Cardiac septum (tissue), 1 donor: ENCODE measurements at regions of chr18 and their contacts with region 1.

Region 1: GRCh38 chr18:63161761-63162195 is 157.8 kb downstream of the BCL2 start:
- DNase-seq: peak; percentile 83

Region 2: DNA sequence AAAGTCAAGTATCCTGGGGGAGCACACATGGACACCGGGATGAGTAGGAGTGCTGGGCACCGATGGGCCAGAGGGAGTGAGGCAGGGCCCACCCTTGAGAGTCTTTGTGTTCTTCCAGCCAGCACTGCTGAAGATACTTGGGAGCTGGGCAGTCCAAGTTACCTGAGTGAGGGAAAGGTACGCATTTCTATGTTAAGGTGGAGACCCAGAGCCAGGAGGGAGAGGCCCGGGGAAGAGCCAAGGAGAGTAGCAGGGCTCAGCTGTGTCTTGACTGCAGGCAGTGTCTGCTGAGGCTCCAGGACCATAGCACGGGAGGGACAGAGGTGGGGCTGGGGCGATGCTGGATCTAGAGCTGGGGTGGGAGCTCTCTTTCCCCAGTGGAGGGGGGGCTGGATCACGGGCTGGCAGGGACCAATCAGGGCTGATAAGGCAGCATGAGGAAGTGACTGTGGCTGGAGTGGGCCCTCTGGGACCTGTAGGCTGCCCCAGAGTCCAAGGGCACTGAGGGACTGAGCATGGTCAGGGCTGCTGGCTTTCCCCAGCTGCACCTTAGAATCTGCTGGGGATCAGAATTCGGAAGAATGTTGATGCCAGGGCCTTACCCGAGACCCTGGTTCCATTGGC is 157.2 kb before region 1 on chr18:
- intact Hi-C with region 1: no loop called
- DNase-seq: peak; percentile 65

Region 3: DNA sequence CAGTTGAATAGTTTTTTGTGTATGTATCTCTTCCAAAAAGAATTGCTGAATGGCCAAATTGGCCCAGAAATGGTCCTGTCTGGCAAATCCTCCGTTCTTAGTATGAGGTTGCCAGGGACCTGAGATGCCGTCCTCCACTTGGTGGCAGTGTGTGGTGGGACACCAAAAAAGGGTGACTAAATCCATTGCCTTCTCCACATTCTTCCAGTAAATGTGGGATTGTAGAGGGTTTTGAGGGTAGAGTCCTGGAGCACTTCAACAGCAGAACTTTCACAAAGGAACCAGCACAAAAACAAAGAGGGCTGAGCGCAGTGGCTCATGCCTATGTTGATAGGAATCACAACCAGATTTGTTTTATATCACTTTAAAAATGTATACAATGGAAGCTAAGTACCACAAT is 42.1 kb before region 1 on chr18:
- intact Hi-C with region 1: loop called (anchors 2 kb)
- DNase-seq: no peak

Region 4: GRCh38 chr18:63186520-63187222 is 24.9 kb after region 1 on chr18:
- intact Hi-C with region 1: loop called (anchors 2 kb)
- DNase-seq: no peak

Region 5: GRCh38 chr18:63378919-63379638 is 217.3 kb after region 1 on chr18:
- intact Hi-C with region 1: no loop called
- DNase-seq: no peak